ENCODE measurements at regions of chr21 and their contacts with region 1.

Region 1: DNA sequence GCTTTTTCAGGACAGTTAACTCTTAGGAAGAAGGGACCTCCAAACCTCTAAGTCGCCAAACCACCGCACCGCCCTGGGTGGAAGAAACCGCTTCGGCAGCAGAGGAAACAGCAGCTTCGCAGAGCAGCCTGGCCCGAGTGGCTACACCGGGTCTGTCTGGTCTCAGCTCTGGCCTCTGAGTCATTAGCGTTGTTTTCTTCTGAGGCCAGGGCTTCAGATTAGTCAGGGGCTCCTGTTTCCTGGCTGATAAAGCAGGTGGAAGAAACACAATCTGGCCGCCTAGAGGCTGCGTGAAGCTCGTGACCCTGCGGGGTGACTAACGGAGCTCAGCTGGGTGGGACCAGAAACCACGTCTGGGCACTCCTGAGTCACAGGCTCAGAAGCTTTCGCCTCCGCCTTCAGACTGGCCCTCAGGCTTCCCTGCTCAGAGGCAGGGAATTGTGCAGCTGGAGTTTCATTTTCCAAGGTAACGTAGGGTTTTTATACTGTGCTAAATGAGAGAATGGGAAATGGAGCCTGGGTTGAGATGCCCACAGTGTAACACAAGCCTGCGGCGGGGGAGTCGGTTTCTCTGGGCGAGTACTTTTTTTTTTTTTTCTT is 44.9 kb downstream of the CHAF1B start:
- DNase-seq: peak; percentile 99
- H3K4me3 Mint-ChIP-seq: peak overlapping the region; percentile 80
- H3K27ac Mint-ChIP-seq: peak overlapping the region; percentile 98
- H3K4me1 Mint-ChIP-seq: peaks cover 32% of the 10 kb centered on the region
- H3K27me3 Mint-ChIP-seq: no peaks in the 10 kb centered on the region
- CTCF ChIP-seq: no peak

Region 2: GRCh38 chr21:36235058-36235582 is 194.9 kb before region 1 on chr21:
- CTCF ChIA-PET with region 1: no interaction called
- POLR2A ChIA-PET with region 1: no interaction called
- intact Hi-C with region 1: no loop called
- DNase-seq: no peak
- H3K4me3 Mint-ChIP-seq: no peak overlapping the region
- H3K27ac Mint-ChIP-seq: no peak overlapping the region
- H3K4me1 Mint-ChIP-seq: peaks cover 6% of the 10 kb centered on the region
- H3K27me3 Mint-ChIP-seq: no peaks in the 10 kb centered on the region
- CTCF ChIP-seq: no peak

Region 3: DNA sequence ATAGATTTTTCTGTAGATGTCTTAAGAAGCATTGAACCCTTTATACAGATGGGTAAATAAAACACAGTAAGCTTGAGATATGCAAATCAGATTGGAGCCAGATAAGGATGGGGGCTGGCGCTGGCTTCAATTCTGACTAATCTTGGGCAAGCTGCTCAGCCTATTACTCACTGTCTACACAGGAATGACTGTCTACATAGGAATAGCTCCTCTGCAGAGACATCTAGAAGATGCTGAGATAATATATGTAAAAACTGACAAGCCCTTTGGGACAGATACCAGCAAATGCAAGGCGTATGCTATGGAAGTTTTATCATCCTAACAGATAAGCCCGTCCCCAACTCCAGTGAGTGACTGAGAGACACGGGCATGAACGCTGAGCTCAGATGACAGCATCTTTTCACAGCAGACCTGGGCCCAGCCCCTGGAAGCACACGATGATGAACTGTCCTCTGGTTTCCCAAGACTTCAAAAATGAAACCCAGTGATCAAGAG is 48.2 kb after region 1 on chr21:
- CTCF ChIA-PET with region 1: no interaction called
- POLR2A ChIA-PET with region 1: no interaction called
- intact Hi-C with region 1: loop called (anchors 2 kb)
- DNase-seq: peak; percentile 48
- H3K4me3 Mint-ChIP-seq: no peak overlapping the region
- H3K27ac Mint-ChIP-seq: no peak overlapping the region
- H3K4me1 Mint-ChIP-seq: peaks cover 6% of the 10 kb centered on the region
- H3K27me3 Mint-ChIP-seq: no peaks in the 10 kb centered on the region
- CTCF ChIP-seq: no peak

Measured in MCF 10A (cell line).